ENCODE measurements at regions of chr11 and their contacts with region 1.

Region 1: GRCh38 chr11:19742588-19743292 is 30.1 kb downstream of the NAV2 start:
- DNase-seq: peak; percentile 79
- ATAC-seq: peak; percentile 92
- H3K4me3 ChIP-seq: no peak overlapping the region
- H3K27ac ChIP-seq: no peak overlapping the region
- H3K4me1 ChIP-seq: no peaks in the 10 kb centered on the region
- H3K27me3 ChIP-seq: no peaks in the 10 kb centered on the region
- CTCF ChIP-seq: peak; percentile 89
- POLR2A ChIP-seq: no peak
- RAD21 ChIP-seq: peak; percentile 97

Region 2: GRCh38 chr11:19311308-19312030 is 431.3 kb before region 1 on chr11:
- CTCF ChIA-PET with region 1: no interaction called
- POLR2A ChIA-PET with region 1: no interaction called
- dilution Hi-C with region 1: no loop called
- in situ Hi-C with region 1: loop called (anchors 10 kb)
- intact Hi-C with region 1: loop called (anchors 5 kb)
- DNase-seq: peak; percentile 50
- ATAC-seq: peak; percentile 100
- H3K4me3 ChIP-seq: no peak overlapping the region
- H3K27ac ChIP-seq: no peak overlapping the region
- H3K4me1 ChIP-seq: no peaks in the 10 kb centered on the region
- H3K27me3 ChIP-seq: peaks cover 45% of the 10 kb centered on the region
- CTCF ChIP-seq: peak; percentile 88
- POLR2A ChIP-seq: no peak
- RAD21 ChIP-seq: peak; percentile 83

Region 3: DNA sequence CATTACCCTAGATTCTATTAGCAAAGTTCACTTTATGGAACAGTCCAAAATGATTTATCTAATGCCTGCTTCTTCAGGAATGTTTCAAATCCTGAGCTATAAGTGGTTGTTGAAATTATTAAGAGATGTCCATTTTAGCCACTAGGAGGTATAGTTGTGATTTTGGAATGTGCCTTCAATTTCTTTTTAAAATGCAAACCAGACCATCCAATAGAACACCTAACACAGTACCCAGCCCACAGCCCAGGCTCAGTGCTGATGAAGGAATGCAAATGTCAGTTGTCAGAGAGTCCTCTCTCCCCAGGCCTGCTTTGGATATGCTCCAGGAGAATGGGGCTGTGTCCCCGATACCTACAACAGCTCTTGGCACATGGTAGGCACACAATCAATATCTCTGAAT is 416.2 kb before region 1 on chr11:
- CTCF ChIA-PET with region 1: no interaction called
- POLR2A ChIA-PET with region 1: no interaction called
- dilution Hi-C with region 1: no loop called
- in situ Hi-C with region 1: no loop called
- intact Hi-C with region 1: loop called (anchors 5 kb)
- DNase-seq: peak; percentile 29
- ATAC-seq: peak; percentile 75
- H3K4me3 ChIP-seq: no peak overlapping the region
- H3K27ac ChIP-seq: no peak overlapping the region
- H3K4me1 ChIP-seq: no peaks in the 10 kb centered on the region; the same call in 1 of the 2 replicates
- H3K27me3 ChIP-seq: peaks cover 47% of the 10 kb centered on the region
- CTCF ChIP-seq: peak; percentile 52
- POLR2A ChIP-seq: no peak
- RAD21 ChIP-seq: peak; percentile 58

Region 4: GRCh38 chr11:19566583-19567379 is 176.0 kb before region 1 on chr11:
- CTCF ChIA-PET with region 1: interaction called, 23 read pairs
- POLR2A ChIA-PET with region 1: no interaction called
- dilution Hi-C with region 1: no loop called
- in situ Hi-C with region 1: loop called (anchors 5 kb)
- intact Hi-C with region 1: loop called (anchors 1 kb)
- DNase-seq: no peak
- ATAC-seq: no peak
- H3K4me3 ChIP-seq: no peak overlapping the region
- H3K27ac ChIP-seq: no peak overlapping the region
- H3K4me1 ChIP-seq: no peaks in the 10 kb centered on the region; the same call in 1 of the 2 replicates
- H3K27me3 ChIP-seq: peaks cover 1% of the 10 kb centered on the region
- CTCF ChIP-seq: no peak
- POLR2A ChIP-seq: no peak
- RAD21 ChIP-seq: no peak

Measured in IMR-90 (cell line).